ENCODE measurements at regions of chr1 and their contacts with region 1.

Region 1: DNA sequence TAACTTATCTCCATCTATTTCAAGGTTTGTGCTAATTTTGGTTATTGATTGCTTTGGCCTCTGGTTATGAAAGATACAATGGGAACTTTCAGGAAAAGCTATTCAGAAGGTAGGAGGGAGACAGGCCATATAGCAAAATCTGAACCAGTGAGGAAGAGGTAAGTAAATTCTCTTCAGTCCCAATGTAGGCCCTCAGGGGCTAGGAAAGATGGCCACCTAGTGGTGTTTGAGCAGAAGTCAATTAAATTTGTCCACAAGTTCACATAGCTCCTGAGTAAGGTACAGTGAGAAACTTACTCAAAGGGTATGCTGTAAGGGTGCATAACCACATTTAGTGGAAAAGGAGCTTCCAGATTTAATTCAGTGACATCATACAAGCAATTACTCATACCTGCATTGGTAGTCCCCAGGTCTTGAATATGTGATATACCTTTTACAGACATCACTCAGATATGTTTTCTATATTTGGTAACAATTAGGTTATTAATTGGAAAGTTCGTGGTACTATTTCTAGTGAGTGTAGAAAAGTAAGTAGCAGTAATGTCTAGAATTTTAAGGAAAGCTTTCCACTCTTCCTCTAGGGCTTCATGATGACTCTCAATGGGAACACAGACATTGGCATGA is 21.4 kb upstream of the FMO1 start:
- DNase-seq: peak in 1 of 2 donors; percentile 26
- ATAC-seq: peak; percentile 94

Region 2: GRCh38 chr1:170967042-170967910 is 259.6 kb before region 1 on chr1:
- intact Hi-C with region 1: loop called in 1 of 2 experiments (anchors 10 kb)
- DNase-seq: no peak
- ATAC-seq: peak; percentile 69

Region 3: GRCh38 chr1:171081314-171081753 is 145.5 kb before region 1 on chr1:
- intact Hi-C with region 1: loop called in 1 of 2 experiments (anchors 10 kb)
- DNase-seq: no peak
- ATAC-seq: peak; percentile 83

Region 4: GRCh38 chr1:171329251-171329650 is 102.4 kb after region 1 on chr1:
- intact Hi-C with region 1: no loop called
- DNase-seq: no peak
- ATAC-seq: no peak